Activated T-helper 2 cell treated with anti-CD3 and anti-CD28 coated beads, Interferon-gamma antibody, Interleukin-2, Interleukin-4, amounts not matched to agents 10 μg/mL and 5 μg/mL and 100 μg/mL, durations not matched to agents 14 hours and 24 hours and 36 hours (primary cell): ENCODE measurements at regions of chr1 and their contacts with region 1.

Region 1: DNA sequence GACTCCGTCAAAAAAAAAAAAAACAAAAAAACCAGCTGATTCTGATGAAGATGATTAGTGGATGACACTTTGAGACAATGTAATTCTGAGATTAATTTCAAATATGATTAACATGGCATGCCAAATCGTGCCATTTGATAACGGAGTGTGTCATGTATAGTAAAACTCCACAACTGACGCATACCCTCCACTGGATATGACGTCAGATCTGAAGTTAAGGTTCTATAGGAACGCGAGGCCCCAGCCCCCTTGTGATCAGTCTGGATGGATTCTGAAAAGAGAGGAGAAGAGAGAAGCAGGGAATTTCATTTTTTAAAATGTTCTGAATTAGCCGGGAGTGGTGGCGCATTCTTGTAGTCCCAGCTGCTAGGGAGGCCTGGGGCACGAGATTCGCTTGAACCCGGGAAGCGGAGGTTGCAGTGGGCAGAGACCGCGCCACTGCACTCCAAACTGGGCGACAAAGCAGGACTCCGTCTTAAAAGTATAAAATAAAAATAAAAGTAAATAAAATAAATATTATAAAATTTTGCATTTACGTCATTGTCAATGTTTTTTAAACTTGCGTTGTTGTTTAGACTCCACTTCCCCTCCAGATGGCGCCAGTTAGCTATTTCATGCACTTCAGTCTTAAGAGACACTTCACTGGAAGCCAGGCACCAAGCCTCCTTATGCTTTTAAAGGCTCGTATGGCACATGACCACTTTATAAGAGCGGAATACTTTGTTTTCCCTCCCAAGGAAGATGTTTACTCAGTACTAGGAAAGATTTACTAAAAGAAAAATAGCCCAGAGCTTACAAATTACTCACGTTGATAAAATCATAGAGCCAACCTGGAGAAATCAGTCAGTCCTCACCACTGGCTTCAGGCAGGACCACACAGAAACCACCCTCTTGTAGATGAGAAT is 65.5 kb downstream of the UBE2U start:
- DNase-seq: peak; percentile 25
- H3K4me3 Mint-ChIP-seq: no peak overlapping the region
- H3K27ac Mint-ChIP-seq: no peak overlapping the region
- H3K4me1 Mint-ChIP-seq: no peaks in the 10 kb centered on the region
- H3K27me3 Mint-ChIP-seq: peaks cover 7% of the 10 kb centered on the region

Region 2: DNA sequence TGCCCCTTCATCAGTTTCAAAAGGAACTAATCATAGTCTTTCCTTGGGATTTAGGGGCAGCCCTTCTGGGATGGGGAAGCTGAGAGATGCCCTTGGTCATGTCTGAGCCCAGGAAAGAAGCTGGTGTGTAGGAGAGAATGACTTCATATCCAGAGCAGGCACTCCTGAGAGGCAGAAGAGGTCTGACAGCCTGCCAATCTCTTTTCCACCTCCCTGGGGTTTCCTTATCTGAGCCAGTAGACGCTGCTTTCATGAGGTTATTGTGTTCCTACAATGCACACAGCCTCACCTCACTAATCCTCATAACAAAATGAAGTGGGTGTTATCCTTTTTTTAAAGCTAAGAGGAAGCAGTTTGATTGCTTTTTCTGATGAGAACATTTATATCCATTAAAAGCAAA is 481.0 kb before region 1 on chr1:
- intact Hi-C with region 1: no loop called
- DNase-seq: no peak
- H3K4me3 Mint-ChIP-seq: no peak overlapping the region
- H3K27ac Mint-ChIP-seq: no peak overlapping the region
- H3K4me1 Mint-ChIP-seq: no peaks in the 10 kb centered on the region
- H3K27me3 Mint-ChIP-seq: peaks cover 4% of the 10 kb centered on the region

Region 3: DNA sequence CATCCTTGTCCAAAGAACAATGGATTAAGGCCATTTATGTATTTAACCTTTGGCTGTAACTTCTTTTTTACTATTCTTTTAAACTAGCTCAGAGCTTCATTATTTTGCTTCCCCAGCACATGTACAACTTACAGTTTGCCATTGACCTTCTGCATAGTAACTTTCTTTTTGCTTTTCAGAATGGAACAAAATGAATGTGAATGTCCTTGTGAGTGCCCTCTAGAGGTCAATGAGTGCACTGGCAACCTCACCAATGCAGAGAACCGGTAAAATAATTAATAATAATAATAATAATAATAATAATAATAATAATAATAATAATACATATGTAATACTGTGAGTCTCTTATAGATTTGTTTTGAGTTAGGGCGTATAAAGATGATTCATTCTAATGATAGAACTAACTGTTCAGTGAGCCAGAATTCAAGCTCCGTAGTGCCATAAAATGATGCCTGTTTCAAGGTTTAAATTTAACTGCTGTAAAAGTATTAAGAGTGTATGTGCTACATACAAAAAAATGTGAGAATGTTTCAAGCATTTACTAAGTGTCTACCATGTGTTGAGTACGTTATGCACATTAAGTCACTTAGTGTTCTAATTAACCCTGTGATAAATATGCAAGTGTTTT is 406.9 kb after region 1 on chr1:
- intact Hi-C with region 1: loop called (anchors 2 kb)
- DNase-seq: no peak
- H3K4me3 Mint-ChIP-seq: no peak overlapping the region
- H3K27ac Mint-ChIP-seq: no peak overlapping the region
- H3K4me1 Mint-ChIP-seq: no peaks in the 10 kb centered on the region
- H3K27me3 Mint-ChIP-seq: no peaks in the 10 kb centered on the region

Region 4: GRCh38 chr1:65177457-65177856 is 908.6 kb after region 1 on chr1:
- intact Hi-C with region 1: no loop called
- DNase-seq: no peak
- H3K4me3 Mint-ChIP-seq: no peak overlapping the region
- H3K27ac Mint-ChIP-seq: no peak overlapping the region
- H3K4me1 Mint-ChIP-seq: peaks cover 20% of the 10 kb centered on the region
- H3K27me3 Mint-ChIP-seq: no peaks in the 10 kb centered on the region